Activated CD4-positive, alpha-beta T cell treated with anti-CD3 and anti-CD28 coated beads for 36 hours (primary cell): ENCODE measurements at regions of chr1 and their contacts with region 1.

Region 1: DNA sequence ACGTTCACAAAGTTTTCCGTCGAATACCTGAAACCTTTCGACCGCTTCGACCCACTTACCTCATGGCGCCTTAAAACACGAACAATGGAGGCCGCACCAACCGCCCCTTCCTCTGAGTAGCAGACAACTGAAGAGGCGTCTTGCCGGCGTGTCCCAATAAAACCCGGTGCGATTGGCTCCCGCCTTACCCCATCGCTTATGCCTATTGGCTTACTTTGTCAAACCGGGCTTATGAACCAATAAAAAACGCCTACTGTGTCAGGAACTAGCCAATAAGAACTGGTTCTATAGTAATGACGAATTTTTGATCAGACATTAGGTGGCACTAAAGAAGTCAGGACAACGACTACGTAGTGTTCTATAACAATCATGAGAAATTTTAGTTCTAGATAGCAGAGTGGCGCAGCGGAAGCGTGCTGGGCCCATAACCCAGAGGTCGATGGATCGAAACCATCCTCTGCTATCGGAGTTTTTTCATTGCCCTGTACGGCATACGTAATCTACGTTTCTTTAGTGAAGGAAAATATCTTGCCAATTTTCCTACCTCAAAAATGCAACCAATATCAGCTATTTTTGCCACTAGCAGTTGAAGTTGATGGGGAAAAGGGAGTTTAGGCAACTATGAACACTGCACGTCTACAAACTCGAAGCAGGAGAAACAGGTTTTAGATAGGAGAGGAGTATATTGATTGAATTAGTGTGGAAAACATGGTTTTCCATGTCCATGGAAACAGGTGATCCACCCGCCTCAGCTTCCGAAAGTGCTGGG is at the start of gene ILF2:
- DNase-seq: peak; percentile 99
- ATAC-seq: peak; percentile 92
- H3K4me3 Mint-ChIP-seq: no peak within 1 kb of the TSS
- H3K27ac Mint-ChIP-seq: no peak within 1 kb of the TSS
- H3K4me1 Mint-ChIP-seq: peaks cover 34% of the 10 kb centered on the region
- H3K27me3 Mint-ChIP-seq: no peaks in the 10 kb centered on the region
- total RNA-seq, gene ILF2: 325 to 435 TPM

Region 2: DNA sequence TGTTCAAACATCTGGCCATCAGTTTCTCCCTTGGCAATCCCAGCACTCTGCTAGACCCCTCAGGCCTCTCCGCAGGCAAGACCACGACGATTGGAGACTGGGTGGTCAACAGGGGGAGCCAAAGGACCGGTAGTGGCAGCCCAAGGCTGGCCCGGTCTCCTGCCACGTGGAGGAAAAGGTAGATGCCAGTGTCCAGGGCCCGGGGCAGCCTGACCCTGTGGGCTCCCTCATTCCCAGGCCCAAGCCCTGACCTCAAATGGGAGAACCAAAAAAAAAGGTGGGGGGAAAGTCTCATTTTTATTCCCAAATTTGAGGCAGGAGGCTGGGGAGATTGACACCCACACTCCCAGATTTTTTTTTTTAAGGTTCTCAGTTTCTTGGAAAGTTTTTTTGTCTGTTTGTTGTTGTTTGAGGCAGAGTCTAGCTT is 160.0 kb before region 1 on chr1:
- CTCF ChIA-PET with region 1: interaction called, 8 read pairs
- POLR2A ChIA-PET with region 1: no interaction called
- intact Hi-C with region 1: loop called (anchors 2 to 5 kb)
- DNase-seq: peak; percentile 90
- ATAC-seq: peak; percentile 95
- H3K4me3 Mint-ChIP-seq: no peak overlapping the region
- H3K27ac Mint-ChIP-seq: peak overlapping the region; percentile 74
- H3K4me1 Mint-ChIP-seq: peaks cover 10% of the 10 kb centered on the region
- H3K27me3 Mint-ChIP-seq: no peaks in the 10 kb centered on the region

Region 3: DNA sequence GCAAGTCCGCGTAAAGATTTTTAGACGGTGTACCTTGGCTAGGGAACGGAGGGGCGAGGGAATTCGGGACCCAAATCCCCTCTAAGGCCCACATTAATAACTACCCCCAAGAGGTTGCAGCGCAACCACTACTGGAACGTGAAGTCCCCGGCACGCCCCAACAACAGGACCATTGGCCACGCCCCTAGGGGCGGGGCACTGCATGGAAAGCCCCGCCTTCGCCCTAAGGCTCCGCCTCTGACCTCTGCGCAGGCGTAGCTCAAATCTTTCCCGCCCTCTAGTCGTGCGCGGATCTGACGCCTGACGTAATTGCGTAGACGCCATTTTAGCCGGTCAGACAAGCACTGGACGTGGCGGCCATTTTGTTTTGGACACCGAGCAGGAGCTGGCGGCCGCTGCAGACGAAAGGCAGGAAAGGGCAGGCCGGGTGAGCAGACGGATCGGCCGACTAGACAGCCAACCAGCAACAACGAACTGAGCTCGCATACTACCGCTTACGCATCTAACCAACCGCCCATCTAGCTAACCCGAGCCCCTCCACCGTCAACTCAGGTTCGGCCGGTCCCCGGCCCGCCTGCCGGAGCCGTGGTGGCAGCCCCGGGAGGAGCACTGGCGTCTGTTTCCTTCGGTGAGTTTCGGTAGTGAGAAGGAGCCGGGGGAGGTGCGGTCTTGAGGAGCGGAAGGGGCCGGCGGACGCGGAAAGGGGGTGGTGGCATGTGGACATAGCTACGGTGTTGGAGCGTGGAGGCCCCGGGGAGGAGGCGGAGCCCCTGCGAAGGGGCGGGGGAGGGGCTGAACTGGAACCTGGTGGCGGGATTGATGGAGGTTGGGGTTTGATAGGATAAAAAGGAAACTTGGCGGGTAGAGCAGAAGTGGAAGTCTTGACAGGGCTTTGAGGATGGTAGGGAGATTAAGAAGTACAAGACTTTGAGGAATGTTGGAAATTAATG is 37.1 kb before region 1 on chr1 and contains the start of gene CHTOP:
- CTCF ChIA-PET with region 1: interaction called, 8 read pairs
- POLR2A ChIA-PET with region 1: interaction called, 13 read pairs
- intact Hi-C with region 1: loop called (anchors 1 kb)
- DNase-seq: peak; percentile 98
- ATAC-seq: peak; percentile 93
- H3K4me3 Mint-ChIP-seq: peak within 1 kb of the TSS; percentile 98
- H3K27ac Mint-ChIP-seq: peak within 1 kb of the TSS; percentile 98
- H3K4me1 Mint-ChIP-seq: peaks cover 50% of the 10 kb centered on the region
- H3K27me3 Mint-ChIP-seq: no peaks in the 10 kb centered on the region
- total RNA-seq, gene CHTOP: 85.1 to 91.4 TPM

Region 4: DNA sequence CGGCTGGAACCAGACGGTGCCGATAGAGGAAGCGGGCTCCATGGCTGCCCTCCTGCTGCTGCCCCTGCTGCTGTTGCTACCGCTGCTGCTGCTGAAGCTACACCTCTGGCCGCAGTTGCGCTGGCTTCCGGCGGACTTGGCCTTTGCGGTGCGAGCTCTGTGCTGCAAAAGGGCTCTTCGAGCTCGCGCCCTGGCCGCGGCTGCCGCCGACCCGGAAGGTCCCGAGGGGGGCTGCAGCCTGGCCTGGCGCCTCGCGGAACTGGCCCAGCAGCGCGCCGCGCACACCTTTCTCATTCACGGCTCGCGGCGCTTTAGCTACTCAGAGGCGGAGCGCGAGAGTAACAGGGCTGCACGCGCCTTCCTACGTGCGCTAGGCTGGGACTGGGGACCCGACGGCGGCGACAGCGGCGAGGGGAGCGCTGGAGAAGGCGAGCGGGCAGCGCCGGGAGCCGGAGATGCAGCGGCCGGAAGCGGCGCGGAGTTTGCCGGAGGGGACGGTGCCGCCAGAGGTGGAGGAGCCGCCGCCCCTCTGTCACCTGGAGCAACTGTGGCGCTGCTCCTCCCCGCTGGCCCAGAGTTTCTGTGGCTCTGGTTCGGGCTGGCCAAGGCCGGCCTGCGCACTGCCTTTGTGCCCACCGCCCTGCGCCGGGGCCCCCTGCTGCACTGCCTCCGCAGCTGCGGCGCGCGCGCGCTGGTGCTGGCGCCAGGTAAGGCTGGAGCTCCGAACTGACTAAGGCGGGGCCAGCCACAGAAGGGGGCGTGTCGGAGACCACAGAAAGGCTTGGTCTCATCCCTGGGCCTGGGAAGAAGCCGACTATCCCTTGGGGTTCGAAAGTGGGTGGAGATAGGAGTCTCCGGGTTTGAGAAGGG is 104.7 kb after region 1 on chr1:
- CTCF ChIA-PET with region 1: interaction called, 6 read pairs
- POLR2A ChIA-PET with region 1: no interaction called
- intact Hi-C with region 1: loop called in 1 of 2 experiments (anchors 10 kb)
- DNase-seq: peak; percentile 76
- ATAC-seq: peak; percentile 73
- H3K4me3 Mint-ChIP-seq: peak overlapping the region; percentile 69
- H3K27ac Mint-ChIP-seq: no peak overlapping the region
- H3K4me1 Mint-ChIP-seq: peaks cover 14% of the 10 kb centered on the region
- H3K27me3 Mint-ChIP-seq: no peaks in the 10 kb centered on the region

Region 5: DNA sequence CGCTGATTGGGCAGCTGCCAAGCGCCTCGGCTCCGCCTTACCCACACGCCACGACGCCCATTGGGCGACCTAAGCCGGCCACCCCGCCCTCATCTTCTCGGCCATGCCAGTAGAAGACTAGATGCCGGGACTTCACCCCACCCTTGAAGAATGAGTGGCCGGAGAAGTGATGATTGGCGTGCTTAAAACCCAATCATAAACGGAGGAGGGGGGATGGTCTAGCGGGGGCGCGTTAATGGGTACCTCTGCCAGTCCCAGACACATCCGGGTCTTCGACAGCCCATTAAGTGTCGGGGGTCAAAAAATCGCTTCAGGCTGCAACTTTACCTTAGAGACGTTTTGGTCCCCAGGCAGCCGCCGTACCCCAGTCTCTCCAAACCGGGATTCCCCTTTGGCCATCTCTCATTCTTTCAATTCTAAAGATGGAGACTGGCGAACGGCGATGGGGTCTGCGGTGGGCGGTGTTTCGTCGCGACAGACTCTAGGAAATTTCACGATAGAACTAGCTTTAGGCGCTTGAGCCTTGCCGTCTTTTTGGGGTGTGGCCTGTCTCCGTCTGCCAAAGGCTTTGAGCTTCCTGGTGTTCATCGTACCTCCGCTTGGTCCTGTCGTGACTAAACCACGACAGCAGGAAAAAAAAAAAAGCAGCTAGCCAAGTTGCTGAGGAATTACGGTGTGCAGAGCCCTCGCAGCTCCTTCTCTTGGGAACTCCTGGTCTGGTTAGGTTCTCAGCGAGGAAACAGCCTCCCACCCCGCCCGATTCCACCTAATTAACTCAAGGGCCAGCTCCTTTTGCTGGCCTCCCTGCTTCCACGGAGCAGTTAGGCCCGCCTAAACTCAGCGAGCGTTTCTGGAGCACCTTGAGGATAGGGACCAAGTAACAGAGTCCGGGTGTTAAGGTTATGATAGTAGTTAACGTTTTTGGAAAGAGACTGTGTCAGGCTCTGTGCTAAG is 252.2 kb after region 1 on chr1 and contains the start of gene GATAD2B:
- CTCF ChIA-PET with region 1: no interaction called
- POLR2A ChIA-PET with region 1: no interaction called
- intact Hi-C with region 1: loop called in 1 of 2 experiments (anchors 1 kb)
- DNase-seq: peak; percentile 99
- ATAC-seq: peak; percentile 94
- H3K4me3 Mint-ChIP-seq: peak within 1 kb of the TSS; percentile 89
- H3K27ac Mint-ChIP-seq: peak within 1 kb of the TSS; percentile 97
- H3K4me1 Mint-ChIP-seq: peaks cover 36% of the 10 kb centered on the region
- H3K27me3 Mint-ChIP-seq: no peaks in the 10 kb centered on the region
- total RNA-seq, gene GATAD2B: 57.0 to 63.9 TPM

Region 6: GRCh38 chr1:153977250-153978240 is 306.5 kb after region 1 on chr1 and contains the start of gene JTB:
- CTCF ChIA-PET with region 1: no interaction called
- POLR2A ChIA-PET with region 1: no interaction called
- intact Hi-C with region 1: loop called in 1 of 2 experiments (anchors 1 kb)
- DNase-seq: peak; percentile 94
- ATAC-seq: peak; percentile 95
- H3K4me3 Mint-ChIP-seq: peak within 1 kb of the TSS; percentile 97
- H3K27ac Mint-ChIP-seq: peak within 1 kb of the TSS; percentile 97
- H3K4me1 Mint-ChIP-seq: peaks cover 33% of the 10 kb centered on the region
- H3K27me3 Mint-ChIP-seq: no peaks in the 10 kb centered on the region
- total RNA-seq, gene JTB: 107 to 145 TPM

Region 7: DNA sequence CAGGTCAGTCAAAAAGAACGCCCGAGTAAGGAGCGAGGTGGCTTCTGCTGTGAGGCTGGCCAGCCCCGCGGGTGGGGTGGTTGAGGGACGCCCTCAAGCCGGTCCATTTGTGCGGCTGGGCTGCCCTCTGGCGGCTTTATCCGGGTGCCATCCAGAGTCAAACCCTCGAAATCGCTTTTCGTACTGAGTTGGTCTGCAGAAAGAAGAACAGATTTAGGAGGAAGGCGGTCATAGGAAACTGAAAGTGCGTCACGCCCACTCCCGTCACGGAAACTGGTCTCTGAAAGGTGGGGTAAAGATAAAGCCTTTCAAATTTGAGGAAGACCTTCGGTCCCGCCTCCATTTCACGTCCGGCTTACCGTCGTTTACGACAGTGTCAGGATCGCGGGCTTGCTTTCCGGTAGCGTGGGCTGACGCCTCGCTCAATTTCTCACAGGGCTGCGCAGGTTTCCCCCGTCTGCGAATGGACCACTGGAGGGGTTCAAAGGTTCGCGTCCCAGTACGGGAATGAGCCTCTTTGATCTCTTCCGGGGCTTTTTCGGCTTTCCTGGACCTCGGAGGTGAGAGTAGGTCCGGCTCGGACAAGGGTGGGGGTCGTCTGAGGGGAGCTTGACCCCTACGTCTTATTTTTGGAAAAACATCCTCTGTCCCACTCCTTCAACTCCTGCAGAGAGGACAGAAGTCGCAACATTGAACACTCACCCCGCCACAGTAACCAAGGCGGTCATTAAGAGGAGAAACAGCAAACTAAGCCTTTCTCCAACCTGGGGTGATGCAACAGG is 601.4 kb after region 1 on chr1 and contains the start of gene HAX1:
- CTCF ChIA-PET with region 1: no interaction called
- POLR2A ChIA-PET with region 1: no interaction called
- intact Hi-C with region 1: loop called in 1 of 2 experiments (anchors 1 kb)
- DNase-seq: peak; percentile 99
- ATAC-seq: peak; percentile 95
- H3K4me3 Mint-ChIP-seq: peak within 1 kb of the TSS; percentile 99
- H3K27ac Mint-ChIP-seq: peak within 1 kb of the TSS; percentile 99
- H3K4me1 Mint-ChIP-seq: peaks cover 37% of the 10 kb centered on the region
- H3K27me3 Mint-ChIP-seq: no peaks in the 10 kb centered on the region
- total RNA-seq, gene HAX1: 177 to 225 TPM